Sigmoid colon (tissue), 7 donors: ENCODE measurements at regions of chr11 and their contacts with region 1.

Region 1: DNA sequence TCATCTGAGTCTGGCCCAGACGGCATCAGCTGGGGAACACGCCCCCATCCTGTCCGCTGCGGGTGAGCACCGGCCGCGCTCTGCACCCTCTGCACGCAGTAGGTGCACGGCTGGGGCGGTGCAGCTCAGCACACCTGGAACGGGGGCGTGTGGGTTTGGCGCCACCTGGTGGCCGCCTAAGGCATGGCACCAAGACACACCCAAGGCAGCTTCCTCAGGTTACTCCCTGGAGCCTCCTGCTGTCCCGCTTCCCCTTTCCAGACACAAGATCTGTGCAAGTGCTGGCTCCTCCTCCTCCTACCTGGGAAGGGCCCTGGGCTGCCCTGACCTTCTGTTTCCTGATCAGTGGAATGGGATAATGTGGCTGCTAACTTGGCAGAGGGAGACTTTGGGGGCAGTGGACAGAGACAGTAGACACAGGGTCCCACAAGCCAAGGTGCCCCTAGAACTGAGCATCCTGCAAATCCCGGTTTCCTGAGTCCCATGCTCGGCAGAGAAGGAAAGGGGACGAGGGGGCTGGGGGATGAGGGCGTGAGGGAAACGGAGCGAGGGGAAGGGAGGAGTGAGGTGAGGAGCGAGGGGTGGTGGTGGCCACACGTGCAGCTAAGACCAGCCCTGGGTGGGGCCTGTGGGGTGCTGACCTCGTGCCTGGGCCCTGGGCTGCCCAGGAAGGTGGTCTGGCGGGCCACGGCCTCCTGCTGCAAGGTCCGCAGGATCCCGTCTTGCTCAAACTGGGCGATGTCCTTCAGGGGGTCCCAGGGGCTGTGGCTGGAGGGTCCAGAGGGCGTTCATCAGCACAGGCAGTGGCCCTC is 34.8 kb upstream of the CARS1 start:
- DNase-seq: peak; percentile 81
- H3K4me3 ChIP-seq: no peak overlapping the region
- H3K27ac ChIP-seq: no peak overlapping the region
- H3K4me1 ChIP-seq: peaks cover 0 to 4% (median 0%) of the 10 kb centered on the region in 4 donors
- H3K27me3 ChIP-seq: no peaks in the 10 kb centered on the region
- CTCF ChIP-seq: peak; percentile 93 to 100 (median 98)
- EP300 ChIP-seq: no peak
- POLR2A ChIP-seq: no peak

Region 2: GRCh38 chr11:3037040-3037944 is 54.7 kb before region 1 on chr11:
- intact Hi-C with region 1: loop called (anchors 1 kb)
- DNase-seq: peak; percentile 90
- H3K4me3 ChIP-seq: no peak overlapping the region
- H3K27ac ChIP-seq: peak overlapping the region in 3 of 4 donors; percentile 9 to 35 (median 23)
- H3K4me1 ChIP-seq: peaks cover 0 to 14% (median 8%) of the 10 kb centered on the region in 4 donors
- H3K27me3 ChIP-seq: no peaks in the 10 kb centered on the region
- CTCF ChIP-seq: peak; percentile 74 to 90 (median 77)
- EP300 ChIP-seq: no peak
- POLR2A ChIP-seq: no peak

Region 3: GRCh38 chr11:3049430-3050243 is 42.4 kb before region 1 on chr11:
- intact Hi-C with region 1: loop called (anchors 2 kb)
- DNase-seq: peak; percentile 94
- H3K4me3 ChIP-seq: no peak overlapping the region
- H3K27ac ChIP-seq: peak overlapping the region; percentile 72 to 91 (median 86)
- H3K4me1 ChIP-seq: peaks cover 0 to 73% (median 55%) of the 10 kb centered on the region in 4 donors
- H3K27me3 ChIP-seq: no peaks in the 10 kb centered on the region
- CTCF ChIP-seq: peak in 3 of 4 experiments; percentile 10 to 32 (median 12)
- EP300 ChIP-seq: peak in 2 of 4 donors; percentile 59 to 84
- POLR2A ChIP-seq: no peak